ENCODE measurements at regions of chr7 and their contacts with region 1.

Region 1: DNA sequence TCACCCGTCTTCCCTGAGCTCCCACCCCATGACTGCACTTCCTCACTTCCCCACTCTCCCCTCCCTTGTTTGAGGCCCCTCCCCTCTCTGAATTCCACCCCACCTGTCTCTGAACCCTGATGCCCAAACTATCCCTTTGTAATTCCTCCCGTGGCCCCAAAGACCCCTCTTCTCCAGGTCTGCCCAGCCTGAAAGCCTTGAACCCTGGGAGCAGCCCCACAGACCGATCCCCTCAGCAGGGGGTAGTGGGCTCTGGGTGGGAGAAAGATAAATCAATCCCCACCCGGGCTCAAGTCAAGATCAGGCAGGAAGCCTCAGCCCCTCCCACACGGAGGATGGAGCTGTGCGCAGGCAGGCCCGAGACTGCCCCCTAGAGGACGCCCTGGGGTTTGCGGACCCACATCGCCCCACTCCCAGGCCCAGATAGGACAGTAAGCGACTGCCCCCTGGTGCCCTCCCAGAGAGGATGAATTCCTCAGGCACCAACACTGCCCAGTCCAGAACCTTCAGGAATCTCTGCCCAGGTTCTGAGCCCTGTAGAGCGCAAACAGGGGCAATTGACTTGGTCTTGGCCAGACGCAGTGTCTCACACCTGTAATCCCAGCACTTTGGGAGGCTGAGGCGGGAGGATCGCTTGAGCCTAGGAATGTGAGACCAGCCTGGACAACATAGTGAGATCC is 11.7 kb downstream of the HSPB1 start:
- DNase-seq: peak; percentile 93
- H3K4me3 ChIP-seq: no peak overlapping the region
- H3K27ac ChIP-seq: no peak overlapping the region
- H3K4me1 ChIP-seq: peaks cover 14% of the 10 kb centered on the region
- H3K27me3 ChIP-seq: no peaks in the 10 kb centered on the region
- CTCF ChIP-seq: peak; percentile 100
- POLR2A ChIP-seq: no peak

Region 2: GRCh38 chr7:75650681-75651080 is 663.5 kb before region 1 on chr7:
- CTCF ChIA-PET with region 1: no interaction called
- POLR2A ChIA-PET with region 1: no interaction called
- dilution Hi-C with region 1: no loop called
- intact Hi-C with region 1: no loop called
- DNase-seq: peak; percentile 92
- H3K4me3 ChIP-seq: no peak overlapping the region
- H3K27ac ChIP-seq: no peak overlapping the region
- H3K4me1 ChIP-seq: peaks cover 18% of the 10 kb centered on the region
- H3K27me3 ChIP-seq: no peaks in the 10 kb centered on the region
- CTCF ChIP-seq: no peak
- POLR2A ChIP-seq: peak; percentile 30

Region 3: DNA sequence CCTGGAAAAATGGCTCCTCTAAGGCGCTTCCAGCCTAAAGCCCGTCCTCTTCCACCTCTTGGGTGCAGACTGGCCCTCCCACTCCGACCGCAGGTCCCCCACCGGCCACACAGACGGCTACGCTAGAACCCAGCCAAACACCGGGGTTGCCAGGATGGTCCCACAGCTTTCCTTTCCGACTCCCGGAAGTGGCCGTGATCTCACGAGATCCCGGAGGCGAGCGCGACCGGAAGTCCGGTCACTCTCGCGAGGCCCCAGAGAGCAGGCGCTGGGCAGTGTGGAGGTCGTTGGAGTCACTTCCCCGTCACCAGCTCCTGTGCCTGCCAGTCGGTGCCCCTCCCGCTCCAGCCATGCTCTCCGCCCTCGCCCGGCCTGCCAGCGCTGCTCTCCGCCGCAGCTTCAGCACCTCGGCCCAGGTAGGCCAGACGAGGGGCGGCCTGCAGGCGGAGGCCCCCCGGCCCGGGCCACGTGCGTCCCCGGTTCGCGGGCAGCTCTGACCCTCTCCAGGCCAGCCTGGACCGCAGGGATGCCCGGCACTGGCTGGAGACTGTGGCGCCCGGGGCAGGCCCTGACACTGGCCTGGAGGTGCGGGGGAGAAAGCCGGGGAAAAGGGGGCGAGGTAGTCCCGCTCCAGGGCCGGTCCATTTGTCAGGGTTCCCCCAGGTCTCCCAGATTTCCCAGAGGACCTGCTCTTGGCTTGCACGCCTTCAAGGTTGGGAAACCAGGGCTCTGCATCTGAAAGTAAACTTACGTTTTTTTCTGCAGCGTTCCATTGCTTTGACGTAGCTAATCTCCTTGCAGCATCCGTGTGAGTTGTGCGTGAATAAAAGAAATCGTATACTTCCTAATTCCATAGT is 266.1 kb before region 1 on chr7 and contains the starts of genes MDH2 and STYXL1:
- CTCF ChIA-PET with region 1: interaction called, 3 read pairs
- POLR2A ChIA-PET with region 1: no interaction called
- dilution Hi-C with region 1: no loop called
- intact Hi-C with region 1: loop called (anchors 1 kb)
- DNase-seq: peak; percentile 97
- H3K4me3 ChIP-seq: peak within 1 kb of the TSS; percentile 79 to 98 (median 94)
- H3K27ac ChIP-seq: peak within 1 kb of the TSS; percentile 63
- H3K4me1 ChIP-seq: peaks cover 4% of the 10 kb centered on the region
- H3K27me3 ChIP-seq: no peaks in the 10 kb centered on the region
- CTCF ChIP-seq: no peak
- POLR2A ChIP-seq: peak; percentile 87
- total RNA-seq, gene MDH2: 168 and 175 TPM in 2 replicates
- total RNA-seq, gene STYXL1: 23.0 and 24.3 TPM in 2 replicates

Region 4: GRCh38 chr7:76234931-76235441 is 79.2 kb before region 1 on chr7:
- CTCF ChIA-PET with region 1: interaction called, 5 read pairs
- POLR2A ChIA-PET with region 1: interaction called, 3 read pairs
- dilution Hi-C with region 1: no loop called
- intact Hi-C with region 1: loop called (anchors 1 kb)
- DNase-seq: peak; percentile 81
- H3K4me3 ChIP-seq: peak overlapping the region in 1 of 3 experiments; percentile 3
- H3K27ac ChIP-seq: no peak overlapping the region
- H3K4me1 ChIP-seq: no peaks in the 10 kb centered on the region
- H3K27me3 ChIP-seq: peaks cover 0 to 6% of the 10 kb centered on the region in 2 experiments
- CTCF ChIP-seq: no peak
- POLR2A ChIP-seq: no peak

Region 5: GRCh38 chr7:76272851-76273497 is 41.2 kb before region 1 on chr7:
- CTCF ChIA-PET with region 1: interaction called, 11 read pairs
- POLR2A ChIA-PET with region 1: no interaction called
- dilution Hi-C with region 1: no loop called
- intact Hi-C with region 1: no loop called
- DNase-seq: no peak
- H3K4me3 ChIP-seq: no peak overlapping the region
- H3K27ac ChIP-seq: no peak overlapping the region
- H3K4me1 ChIP-seq: no peaks in the 10 kb centered on the region
- H3K27me3 ChIP-seq: peaks cover 28 to 41% of the 10 kb centered on the region in 2 experiments
- CTCF ChIP-seq: no peak
- POLR2A ChIP-seq: no peak

Region 6: GRCh38 chr7:76291343-76292212 is 22.6 kb before region 1 on chr7:
- CTCF ChIA-PET with region 1: interaction called, 132 read pairs
- POLR2A ChIA-PET with region 1: interaction called, 10 read pairs
- dilution Hi-C with region 1: no loop called
- intact Hi-C with region 1: loop called (anchors 1 kb)
- DNase-seq: peak; percentile 99
- H3K4me3 ChIP-seq: no peak overlapping the region
- H3K27ac ChIP-seq: peak overlapping the region; percentile 94
- H3K4me1 ChIP-seq: peaks cover 27% of the 10 kb centered on the region
- H3K27me3 ChIP-seq: no peaks in the 10 kb centered on the region
- CTCF ChIP-seq: peak; percentile 95 to 97
- POLR2A ChIP-seq: no peak

Region 7: DNA sequence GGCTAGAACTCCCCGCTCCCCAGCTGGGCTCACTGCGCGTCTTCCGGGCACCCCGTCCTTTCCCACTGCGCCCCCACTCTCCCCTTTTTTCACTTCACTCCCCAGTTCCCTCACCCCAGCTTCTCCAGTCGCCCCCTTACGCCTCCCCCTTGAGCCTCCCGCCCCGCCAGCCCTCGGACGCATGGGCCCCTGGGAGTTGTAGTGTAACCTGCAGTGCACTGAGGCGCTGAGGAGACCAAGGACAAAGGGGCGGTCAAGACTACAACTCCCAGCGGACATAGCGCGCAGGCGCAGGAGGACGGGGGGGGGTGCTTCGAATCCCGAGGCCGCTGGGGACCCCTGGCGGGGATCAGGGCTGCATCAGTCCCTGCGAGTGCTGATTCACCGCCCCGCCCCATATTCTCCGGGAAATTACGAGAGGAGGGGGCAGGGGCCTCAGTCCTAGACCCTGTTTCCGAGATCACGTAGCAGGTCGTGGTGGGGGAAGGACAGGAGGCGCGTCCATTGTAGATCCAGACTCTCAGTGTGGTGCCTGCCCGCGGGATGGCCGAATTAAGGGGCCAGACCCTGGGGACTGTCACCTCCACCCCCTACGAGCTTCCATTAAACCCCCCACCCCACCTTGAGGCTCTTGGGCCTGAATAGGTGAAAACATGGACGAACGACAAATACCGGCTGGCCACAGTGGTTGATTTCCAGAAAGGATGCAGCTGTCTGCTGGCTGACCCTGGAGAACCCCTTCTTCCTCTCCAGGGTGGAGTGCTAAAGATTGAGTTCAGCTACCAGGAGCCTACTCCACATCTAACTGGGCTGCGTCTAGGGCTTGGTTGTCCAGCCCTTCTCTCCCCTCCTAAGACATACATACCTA is 45.2 kb after region 1 on chr7:
- CTCF ChIA-PET with region 1: interaction called, 10 read pairs
- POLR2A ChIA-PET with region 1: interaction called, 11 read pairs
- dilution Hi-C with region 1: no loop called
- intact Hi-C with region 1: loop called (anchors 1 kb)
- DNase-seq: peak; percentile 98
- H3K4me3 ChIP-seq: peak overlapping the region; percentile 45 to 91 (median 49)
- H3K27ac ChIP-seq: peak overlapping the region; percentile 92
- H3K4me1 ChIP-seq: peaks cover 32% of the 10 kb centered on the region
- H3K27me3 ChIP-seq: no peaks in the 10 kb centered on the region
- CTCF ChIP-seq: peak; percentile 73 to 88
- POLR2A ChIP-seq: peak; percentile 51